WTC11 (cell line): ENCODE measurements at regions of chr9 and their contacts with region 1.

Region 1: GRCh38 chr9:33466565-33467495 is 6.9 kb downstream of the NOL6 start:
- DNase-seq: peak; percentile 88
- ATAC-seq: peak; percentile 93
- H3K4me3 Mint-ChIP-seq: no peak overlapping the region
- H3K27ac Mint-ChIP-seq: no peak overlapping the region
- H3K4me1 Mint-ChIP-seq: no peaks in the 10 kb centered on the region
- H3K27me3 Mint-ChIP-seq: no peaks in the 10 kb centered on the region
- CTCF ChIP-seq: peak; percentile 97

Region 2: DNA sequence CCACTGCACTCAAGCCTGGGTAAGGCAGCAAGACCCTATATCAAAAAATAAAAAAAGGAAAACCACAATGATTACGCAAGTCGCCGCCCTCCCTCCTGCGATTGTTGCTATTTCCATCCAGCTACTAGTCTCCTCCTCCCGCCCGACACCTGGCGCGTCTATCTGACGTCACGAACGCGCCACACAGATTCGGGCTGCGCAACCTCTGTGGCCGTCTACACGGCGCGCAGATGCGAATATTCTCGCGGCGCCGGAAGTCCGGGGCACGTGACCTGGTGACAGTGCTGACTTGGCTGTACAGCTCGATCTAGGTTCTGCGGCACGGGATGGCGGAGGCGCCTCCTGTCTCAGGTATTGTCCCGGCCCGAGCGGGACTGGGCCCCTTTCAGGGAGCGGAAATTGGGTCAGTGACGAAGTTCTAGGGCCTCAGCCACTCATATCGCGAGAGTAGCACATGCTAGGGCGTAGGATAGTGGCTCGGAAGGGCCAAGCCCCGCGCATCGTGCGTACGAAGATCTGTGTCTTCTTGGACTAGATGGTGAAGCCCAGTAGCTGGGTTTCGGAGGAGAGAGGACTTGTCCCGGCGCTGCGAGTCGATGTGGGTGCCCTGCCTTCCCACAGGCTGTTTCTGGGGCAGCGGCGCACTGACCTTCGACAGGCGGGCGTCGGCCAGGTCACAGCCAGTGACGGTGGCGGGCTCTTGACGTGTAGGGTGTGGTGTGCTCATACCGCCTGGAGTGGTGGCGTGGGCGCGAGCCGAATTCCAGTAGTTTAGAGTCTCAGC is 176.4 kb before region 1 on chr9 and contains the start of gene NFX1:
- CTCF ChIA-PET with region 1: interaction called, 15 read pairs
- POLR2A ChIA-PET with region 1: no interaction called
- DNase-seq: peak; percentile 96
- ATAC-seq: peak; percentile 90
- H3K4me3 Mint-ChIP-seq: peak within 1 kb of the TSS; percentile 99
- H3K27ac Mint-ChIP-seq: peak within 1 kb of the TSS; percentile 99
- H3K4me1 Mint-ChIP-seq: peaks cover 14% of the 10 kb centered on the region
- H3K27me3 Mint-ChIP-seq: no peaks in the 10 kb centered on the region
- CTCF ChIP-seq: no peak
- total RNA-seq, gene NFX1: 25.4 to 30.9 TPM (median 26.5 TPM) in 3 replicates

Region 3: GRCh38 chr9:33415501-33416038 is 51.3 kb before region 1 on chr9:
- CTCF ChIA-PET with region 1: interaction called, 22 read pairs
- POLR2A ChIA-PET with region 1: no interaction called
- DNase-seq: peak; percentile 88
- ATAC-seq: peak; percentile 95
- H3K4me3 Mint-ChIP-seq: no peak overlapping the region
- H3K27ac Mint-ChIP-seq: no peak overlapping the region
- H3K4me1 Mint-ChIP-seq: peaks cover 7% of the 10 kb centered on the region
- H3K27me3 Mint-ChIP-seq: no peaks in the 10 kb centered on the region
- CTCF ChIP-seq: peak; percentile 51

Region 4: DNA sequence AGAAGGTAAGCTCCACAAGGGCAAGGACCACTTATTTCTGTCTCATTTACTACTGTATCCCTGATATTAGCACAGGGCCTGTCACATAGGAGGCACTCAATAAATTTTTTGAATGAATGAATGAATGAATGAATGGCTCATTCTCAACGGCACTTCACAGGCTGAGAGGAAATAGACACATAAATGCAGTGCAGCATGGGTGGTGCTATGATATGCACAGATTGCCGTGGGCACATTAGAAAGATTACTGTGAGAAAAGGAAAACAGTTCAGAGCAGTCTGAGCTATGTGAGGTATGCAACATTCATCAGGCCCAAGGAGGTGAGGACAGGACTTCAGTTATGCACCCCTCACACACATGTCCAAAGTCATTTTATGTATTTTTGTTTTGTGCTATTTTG is 13.3 kb after region 1 on chr9:
- CTCF ChIA-PET with region 1: interaction called, 12 read pairs
- POLR2A ChIA-PET with region 1: no interaction called
- DNase-seq: no peak
- ATAC-seq: no peak
- H3K4me3 Mint-ChIP-seq: no peak overlapping the region
- H3K27ac Mint-ChIP-seq: no peak overlapping the region
- H3K4me1 Mint-ChIP-seq: no peaks in the 10 kb centered on the region
- H3K27me3 Mint-ChIP-seq: no peaks in the 10 kb centered on the region
- CTCF ChIP-seq: no peak